CD4-positive, alpha-beta T cell (primary cell): ENCODE measurements at regions of chr4 and their contacts with region 1.

Region 1: GRCh38 chr4:165207431-165208220 is at the start of gene KLHL2:
- DNase-seq: peak; percentile 32 to 88 (median 66)
- ATAC-seq: peak; percentile 78
- H3K4me3 ChIP-seq: peak within 1 kb of the TSS; percentile 88
- H3K4me3 Mint-ChIP-seq: peak within 1 kb of the TSS; percentile 97
- H3K27ac ChIP-seq: peak within 1 kb of the TSS in 1 of 2 donors; percentile 13
- H3K27ac Mint-ChIP-seq: peak within 1 kb of the TSS; percentile 75
- H3K4me1 ChIP-seq: peaks cover 37% of the 10 kb centered on the region
- H3K4me1 Mint-ChIP-seq: peaks cover 66% of the 10 kb centered on the region
- H3K27me3 ChIP-seq: no peaks in the 10 kb centered on the region
- H3K27me3 Mint-ChIP-seq: no peaks in the 10 kb centered on the region
- CTCF ChIP-seq: no peak
- total RNA-seq, gene KLHL2: 19.9 to 20.0 TPM

Region 2: DNA sequence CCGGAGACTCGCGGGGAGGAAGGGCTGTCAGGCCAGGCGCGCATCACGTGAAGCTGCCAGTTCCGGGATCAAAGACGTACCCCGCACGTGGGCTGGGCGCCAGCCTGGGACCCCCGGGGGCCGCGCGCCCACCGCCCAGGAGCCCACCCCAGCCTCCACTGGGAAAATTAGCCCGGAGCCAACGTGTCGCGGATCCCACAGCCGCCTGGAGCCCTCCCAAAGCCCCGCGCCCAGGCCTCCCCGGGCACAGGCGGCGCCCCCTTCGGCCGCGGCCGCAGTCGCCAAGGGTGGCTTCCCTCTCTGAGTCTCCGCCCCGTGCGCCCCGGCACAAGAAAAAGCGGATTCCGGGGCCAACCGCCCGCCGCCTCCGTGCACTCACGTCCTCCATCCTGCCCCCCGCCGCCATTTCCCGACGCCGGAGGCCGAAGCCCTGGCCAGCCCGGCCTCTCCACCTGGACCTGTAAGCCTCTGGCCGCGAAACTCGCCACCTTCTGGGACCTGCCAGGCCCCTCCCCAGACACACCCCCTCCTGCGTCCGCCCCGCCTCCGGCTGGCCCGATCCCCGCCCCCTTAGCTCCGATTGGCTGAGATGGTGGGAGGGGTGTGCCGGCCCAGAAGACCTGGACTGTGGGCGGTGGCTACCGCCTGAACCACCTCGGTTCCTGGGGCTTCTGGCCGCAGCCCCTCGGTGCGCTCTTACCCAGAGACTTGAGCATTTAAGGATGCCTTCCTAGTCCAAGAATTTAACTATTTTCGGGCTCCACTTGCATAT is 95.1 kb before region 1 on chr4 and contains the start of gene TMEM192:
- CTCF ChIA-PET with region 1: interaction called, 8 read pairs
- POLR2A ChIA-PET with region 1: interaction called, 4 read pairs
- intact Hi-C with region 1: loop called in 1 of 2 experiments (anchors 2 kb)
- DNase-seq: peak; percentile 84 to 93 (median 90)
- ATAC-seq: peak; percentile 97
- H3K4me3 ChIP-seq: peak within 1 kb of the TSS; percentile 88
- H3K4me3 Mint-ChIP-seq: peak within 1 kb of the TSS; percentile 93
- H3K27ac ChIP-seq: peak within 1 kb of the TSS; percentile 50 to 52
- H3K27ac Mint-ChIP-seq: peak within 1 kb of the TSS; percentile 84
- H3K4me1 ChIP-seq: peaks cover 12% of the 10 kb centered on the region
- H3K4me1 Mint-ChIP-seq: peaks cover 27% of the 10 kb centered on the region
- H3K27me3 ChIP-seq: no peaks in the 10 kb centered on the region
- H3K27me3 Mint-ChIP-seq: no peaks in the 10 kb centered on the region
- CTCF ChIP-seq: no peak
- total RNA-seq, gene TMEM192: 4.6 to 4.7 TPM

Region 3: DNA sequence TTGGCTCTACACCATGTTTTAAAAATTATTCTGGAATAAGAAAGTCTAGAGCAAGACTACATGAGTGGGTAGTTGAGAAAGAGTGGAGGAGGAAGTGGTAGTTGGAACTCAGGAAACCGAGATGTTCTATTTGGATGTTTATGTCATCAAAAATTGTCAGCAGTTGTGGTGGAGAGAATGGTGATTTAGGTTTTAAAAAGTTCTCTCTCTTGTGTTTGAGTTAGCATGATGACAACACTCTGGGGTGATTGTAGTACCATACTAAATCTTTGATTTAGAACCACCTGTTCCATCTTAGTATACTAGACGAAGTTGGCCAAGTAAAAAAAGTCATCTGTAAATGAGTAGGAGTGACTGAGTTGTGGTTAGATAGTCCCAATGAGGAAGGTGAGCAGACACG is 40.5 kb after region 1 on chr4:
- CTCF ChIA-PET with region 1: no interaction called
- POLR2A ChIA-PET with region 1: no interaction called
- intact Hi-C with region 1: loop called in 1 of 2 experiments (anchors 10 kb)
- DNase-seq: peak in 1 of 14 experiments; percentile 26
- ATAC-seq: peak; percentile 51
- H3K4me3 ChIP-seq: no peak overlapping the region
- H3K4me3 Mint-ChIP-seq: no peak overlapping the region
- H3K27ac ChIP-seq: no peak overlapping the region
- H3K27ac Mint-ChIP-seq: no peak overlapping the region
- H3K4me1 ChIP-seq: peaks cover 6% of the 10 kb centered on the region
- H3K4me1 Mint-ChIP-seq: no peaks in the 10 kb centered on the region
- H3K27me3 ChIP-seq: no peaks in the 10 kb centered on the region
- H3K27me3 Mint-ChIP-seq: no peaks in the 10 kb centered on the region
- CTCF ChIP-seq: no peak

Region 4: GRCh38 chr4:165327211-165328100 is 119.8 kb after region 1 on chr4 and contains the start of gene MSMO1:
- CTCF ChIA-PET with region 1: no interaction called
- POLR2A ChIA-PET with region 1: interaction called, 17 read pairs
- intact Hi-C with region 1: loop called (anchors 2 kb)
- DNase-seq: peak; percentile 94 to 99 (median 97)
- ATAC-seq: peak; percentile 95
- H3K4me3 ChIP-seq: peak within 1 kb of the TSS; percentile 95
- H3K4me3 Mint-ChIP-seq: no peak within 1 kb of the TSS
- H3K27ac ChIP-seq: peak within 1 kb of the TSS; percentile 70 to 79
- H3K27ac Mint-ChIP-seq: no peak within 1 kb of the TSS
- H3K4me1 ChIP-seq: peaks cover 33% of the 10 kb centered on the region
- H3K4me1 Mint-ChIP-seq: peaks cover 23% of the 10 kb centered on the region
- H3K27me3 ChIP-seq: no peaks in the 10 kb centered on the region
- H3K27me3 Mint-ChIP-seq: no peaks in the 10 kb centered on the region
- CTCF ChIP-seq: no peak
- total RNA-seq, gene MSMO1: 13.3 to 15.1 TPM

Region 5: DNA sequence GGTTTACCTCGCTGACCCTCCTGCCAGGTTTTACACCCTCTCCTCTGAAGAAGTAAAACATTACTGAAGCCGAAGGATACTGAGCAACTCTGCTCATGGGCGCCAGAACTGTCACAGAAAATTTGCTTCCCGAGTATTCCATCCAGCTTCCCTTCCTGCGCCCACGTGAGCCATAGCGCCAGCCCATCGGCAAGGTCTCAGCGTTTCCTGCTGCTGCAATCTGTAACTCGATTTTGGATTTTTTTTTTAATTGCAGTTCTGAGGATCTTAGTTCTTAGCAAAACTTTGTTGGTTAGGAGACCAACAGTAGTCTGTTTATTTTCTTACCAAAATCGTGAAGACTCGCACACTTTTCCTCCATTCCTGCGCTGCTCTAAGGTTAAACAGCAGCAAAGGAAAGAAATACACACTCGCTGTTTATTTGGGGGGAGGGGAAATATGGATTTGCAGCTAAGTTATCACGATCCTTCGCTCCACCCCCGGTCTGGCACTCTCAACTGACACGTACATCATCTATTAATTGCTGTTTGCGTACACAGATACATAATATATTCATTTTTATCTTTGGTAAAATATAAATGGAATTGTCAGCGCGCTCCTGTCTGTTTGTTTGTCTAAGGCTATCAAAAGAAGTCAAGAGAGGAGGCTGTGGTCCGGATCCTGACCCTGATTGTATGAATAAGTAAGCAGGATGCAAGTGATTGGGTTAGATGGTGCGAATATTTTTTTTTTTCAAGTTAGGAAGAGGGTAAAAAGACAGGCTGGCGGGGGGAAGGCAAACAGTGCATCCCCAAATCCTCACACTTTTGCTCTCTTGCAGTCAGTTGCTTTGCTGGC is 665.1 kb after region 1 on chr4 and contains the start of gene TLL1:
- CTCF ChIA-PET with region 1: no interaction called
- POLR2A ChIA-PET with region 1: no interaction called
- intact Hi-C with region 1: no loop called
- DNase-seq: no peak
- ATAC-seq: no peak
- H3K4me3 ChIP-seq: no peak within 1 kb of the TSS
- H3K4me3 Mint-ChIP-seq: no peak within 1 kb of the TSS
- H3K27ac ChIP-seq: no peak within 1 kb of the TSS
- H3K27ac Mint-ChIP-seq: no peak within 1 kb of the TSS
- H3K4me1 ChIP-seq: peaks cover 11% of the 10 kb centered on the region
- H3K4me1 Mint-ChIP-seq: peaks cover 10% of the 10 kb centered on the region
- H3K27me3 ChIP-seq: peaks cover 32 to 50% of the 10 kb centered on the region in 2 experiments
- H3K27me3 Mint-ChIP-seq: peaks cover 68% of the 10 kb centered on the region
- CTCF ChIP-seq: no peak
- total RNA-seq, gene TLL1: not detected